ENCODE measurements at regions of chr21 and their contacts with region 1.

Region 1: DNA sequence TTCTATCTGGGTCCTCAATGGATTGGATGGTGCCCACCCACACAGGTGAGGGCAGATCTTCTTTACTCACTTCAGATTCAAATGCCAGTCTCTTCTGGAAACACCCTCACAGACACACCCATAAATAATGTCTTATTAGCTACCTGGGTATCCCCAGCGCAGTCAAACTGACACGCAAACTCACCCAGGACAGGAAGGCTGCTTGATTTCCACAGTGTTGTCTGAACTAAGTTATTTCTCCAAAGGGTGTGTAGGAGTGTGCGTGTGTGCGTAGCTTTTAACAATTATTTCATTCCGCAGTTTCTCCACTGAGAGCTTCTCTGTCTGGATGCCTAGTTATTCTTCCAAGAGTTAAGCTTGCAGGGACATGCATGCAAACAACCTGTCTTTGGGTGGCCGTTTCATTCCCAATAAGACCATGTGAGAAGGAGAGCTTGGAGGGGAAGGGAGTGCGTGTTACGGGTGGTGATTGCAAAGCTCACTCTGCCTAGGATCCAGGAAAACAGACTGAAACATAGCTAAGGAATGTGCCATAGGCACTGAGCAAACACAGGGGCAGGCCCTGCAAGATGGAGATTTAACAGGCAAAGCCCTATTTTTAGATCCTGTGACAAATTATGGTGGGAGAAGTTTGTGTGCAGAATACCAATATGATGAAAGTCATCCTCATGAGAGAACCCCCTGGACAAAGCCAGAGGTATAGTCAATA is 269.7 kb downstream of the DYRK1A start:
- DNase-seq: peak; percentile 80
- H3K4me3 ChIP-seq: peak overlapping the region in 1 of 3 experiments; percentile 4
- H3K27ac ChIP-seq: peak overlapping the region; percentile 57
- H3K4me1 ChIP-seq: peaks cover 24% of the 10 kb centered on the region
- H3K27me3 ChIP-seq: no peaks in the 10 kb centered on the region
- CTCF ChIP-seq: no peak

Region 2: DNA sequence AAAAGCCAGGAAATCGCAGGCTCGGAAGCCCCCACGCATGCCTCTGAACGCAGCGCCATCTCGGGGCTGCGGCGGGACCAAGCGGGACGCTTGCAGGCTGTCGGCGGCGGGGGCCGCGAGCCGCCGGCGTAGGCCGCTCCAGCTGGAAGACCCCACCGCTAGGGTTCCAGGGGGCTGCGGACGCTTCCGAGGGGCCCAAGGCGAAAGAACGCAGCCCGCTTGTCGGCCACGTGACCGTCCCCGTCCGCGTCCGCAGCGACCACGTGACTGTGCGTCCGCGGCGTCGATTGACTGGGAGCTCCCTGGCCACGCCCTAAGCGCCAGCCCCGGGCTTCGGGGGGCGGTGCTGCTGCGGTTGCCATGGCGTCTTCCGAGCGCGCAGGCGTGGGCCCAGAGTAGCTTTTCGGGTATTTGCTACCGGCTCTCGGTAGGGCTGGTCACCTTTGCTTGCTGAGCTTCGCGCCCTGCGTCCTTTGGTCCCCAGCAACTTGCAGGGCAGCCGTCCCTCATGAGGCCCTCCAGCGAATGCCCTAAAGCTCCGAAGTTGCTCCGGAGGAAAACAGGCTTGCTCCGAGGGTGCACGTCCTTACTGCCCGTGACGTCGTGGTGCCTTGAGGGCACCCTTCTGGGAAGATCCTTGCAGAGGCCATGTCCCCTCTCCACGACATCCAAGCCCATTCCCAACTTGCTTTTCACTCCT is 72.5 kb before region 1 on chr21:
- CTCF ChIA-PET with region 1: no interaction called
- dilution Hi-C with region 1: no loop called
- in situ Hi-C with region 1: no loop called
- intact Hi-C with region 1: loop called (anchors 5 kb)
- DNase-seq: peak; percentile 91
- H3K4me3 ChIP-seq: peak overlapping the region; percentile 45 to 80 (median 51)
- H3K27ac ChIP-seq: peak overlapping the region; percentile 91
- H3K4me1 ChIP-seq: peaks cover 14% of the 10 kb centered on the region
- H3K27me3 ChIP-seq: no peaks in the 10 kb centered on the region
- CTCF ChIP-seq: peak; percentile 11 to 57